ENCODE measurements at regions of chrX and their contacts with region 1.

Region 1: DNA sequence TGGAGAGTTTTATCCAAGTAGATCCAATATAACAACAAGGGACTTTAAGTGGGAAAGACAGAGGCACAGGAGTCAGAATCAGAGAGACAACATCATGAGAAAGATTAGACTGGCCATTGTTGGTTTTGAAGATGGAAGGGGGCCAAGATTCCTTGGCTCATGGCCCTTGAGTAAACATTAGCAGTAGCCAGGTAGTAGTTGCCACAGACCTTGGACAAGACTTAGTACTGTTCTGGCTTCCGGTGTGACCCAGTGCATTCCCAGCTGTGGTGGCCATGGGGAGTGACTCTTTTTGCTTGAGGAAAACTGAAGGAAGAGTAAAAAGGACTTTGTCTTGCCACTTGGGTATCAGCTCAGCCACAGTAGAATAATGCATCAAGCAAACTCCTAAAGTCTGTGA is 462.2 kb upstream of the CPXCR1 start:
- DNase-seq: peak; percentile 52 to 54
- H3K4me3 ChIP-seq: no peak overlapping the region
- H3K27ac ChIP-seq: no peak overlapping the region
- H3K4me1 ChIP-seq: no peaks in the 10 kb centered on the region
- H3K27me3 ChIP-seq: no peaks in the 10 kb centered on the region
- CTCF ChIP-seq: no peak
- POLR2A ChIP-seq: no peak

Region 2: DNA sequence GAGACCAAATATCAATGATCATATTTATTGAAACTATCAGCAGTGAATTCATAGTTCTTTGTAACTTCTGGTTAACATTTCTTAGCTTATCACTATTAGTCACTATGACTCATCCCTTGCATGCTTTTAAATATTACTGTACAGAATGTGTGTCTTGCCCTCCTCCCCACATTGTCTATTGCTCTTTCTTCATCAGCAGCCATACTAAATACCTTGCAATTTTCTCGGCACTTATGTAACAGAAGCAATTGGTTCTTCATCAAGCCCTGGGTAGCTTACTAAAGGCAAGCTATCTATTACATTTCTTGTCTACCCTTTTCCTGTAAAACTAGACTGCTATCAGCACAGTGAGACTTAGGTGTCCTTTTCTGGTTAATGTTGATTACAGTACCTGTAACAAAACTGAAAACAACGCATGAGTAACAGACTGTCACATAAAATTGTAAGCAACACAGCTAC is 759.0 kb before region 1 on chrX:
- intact Hi-C with region 1: loop called (anchors 10 kb)
- DNase-seq: no peak
- H3K4me3 ChIP-seq: no peak overlapping the region
- H3K27ac ChIP-seq: no peak overlapping the region
- H3K4me1 ChIP-seq: no peaks in the 10 kb centered on the region
- H3K27me3 ChIP-seq: peaks cover 0 to 4% of the 10 kb centered on the region in 2 donors
- CTCF ChIP-seq: no peak
- POLR2A ChIP-seq: no peak